SK-N-SH (cell line): ENCODE measurements at regions of chr7 and their contacts with region 1.

Region 1: GRCh38 chr7:28020302-28020940 is 160.2 kb downstream of the JAZF1 start:
- DNase-seq: peak; percentile 84
- H3K4me3 ChIP-seq: no peak overlapping the region; a peak in 1 of 4 replicates
- H3K27ac ChIP-seq: no peak overlapping the region
- H3K4me1 ChIP-seq: peaks cover 7 to 14% of the 10 kb centered on the region in 2 experiments; a peak in 2 of 4 replicates
- H3K27me3 ChIP-seq: no peaks in the 10 kb centered on the region
- CTCF ChIP-seq: peak; percentile 97
- EP300 ChIP-seq: no peak
- RAD21 ChIP-seq: peak; percentile 99

Region 2: DNA sequence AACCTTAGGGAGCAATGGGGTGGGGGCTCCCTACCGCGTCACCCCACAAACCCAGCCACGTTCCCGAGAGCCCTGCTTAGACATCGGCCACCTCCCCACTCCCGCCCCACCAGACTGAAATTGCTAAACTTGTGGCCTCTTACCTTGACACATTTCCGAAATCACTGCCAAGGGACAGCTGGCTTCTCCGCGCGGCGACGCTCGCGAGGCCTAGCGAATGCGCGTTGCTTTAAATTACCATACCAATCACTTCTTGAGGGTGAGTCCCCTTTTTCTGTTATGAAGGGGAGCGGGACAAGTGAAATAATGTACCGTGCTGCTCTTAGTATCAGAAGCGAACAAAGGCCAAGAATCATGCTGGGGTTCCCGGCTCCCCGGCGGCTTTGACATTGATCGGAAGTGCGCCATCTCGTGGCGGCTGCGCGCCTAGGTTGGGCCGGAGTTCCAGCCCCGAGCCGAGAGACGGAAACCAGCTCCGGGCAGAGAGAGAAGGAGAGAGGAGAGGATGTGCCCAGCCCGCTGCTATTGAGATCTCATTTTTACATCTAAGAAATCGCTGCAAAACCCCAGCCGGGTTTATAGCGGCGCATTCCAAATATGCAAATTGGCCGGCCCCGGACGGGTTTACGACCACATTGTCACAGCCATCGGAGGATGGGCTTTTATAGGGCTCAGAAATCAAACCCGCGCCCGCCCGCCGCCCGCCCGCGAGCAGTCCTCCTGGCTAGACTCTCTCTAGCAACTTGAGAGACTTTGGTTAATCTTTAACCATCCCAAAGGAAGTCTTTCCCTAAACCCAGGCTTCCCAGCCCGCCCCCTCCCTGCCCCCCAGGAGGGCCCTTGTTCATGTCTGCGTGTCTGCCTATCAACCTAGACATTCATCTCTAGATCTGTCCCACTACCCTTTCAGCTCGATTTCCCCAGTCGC is 840.7 kb before region 1 on chr7:
- CTCF ChIA-PET with region 1: interaction called, 29 read pairs
- POLR2A ChIA-PET with region 1: no interaction called
- DNase-seq: peak; percentile 93
- H3K4me3 ChIP-seq: peak overlapping the region; percentile 5 to 36; a peak in 2 of 4 replicates
- H3K27ac ChIP-seq: no peak overlapping the region
- H3K4me1 ChIP-seq: peaks cover 4 to 10% of the 10 kb centered on the region in 2 experiments; a peak in 1 of 4 replicates
- H3K27me3 ChIP-seq: peaks cover 97% of the 10 kb centered on the region
- CTCF ChIP-seq: peak; percentile 100
- EP300 ChIP-seq: no peak
- RAD21 ChIP-seq: no peak

Region 3: GRCh38 chr7:27210441-27211083 is 809.9 kb before region 1 on chr7:
- CTCF ChIA-PET with region 1: interaction called, 37 read pairs
- POLR2A ChIA-PET with region 1: no interaction called
- DNase-seq: peak; percentile 85
- H3K4me3 ChIP-seq: peak overlapping the region; percentile 31 to 50
- H3K27ac ChIP-seq: no peak overlapping the region
- H3K4me1 ChIP-seq: peaks cover 0 to 16% of the 10 kb centered on the region in 2 experiments; a peak in 1 of 4 replicates
- H3K27me3 ChIP-seq: peaks cover 97% of the 10 kb centered on the region
- CTCF ChIP-seq: peak; percentile 90
- EP300 ChIP-seq: no peak
- RAD21 ChIP-seq: peak; percentile 72

Region 4: DNA sequence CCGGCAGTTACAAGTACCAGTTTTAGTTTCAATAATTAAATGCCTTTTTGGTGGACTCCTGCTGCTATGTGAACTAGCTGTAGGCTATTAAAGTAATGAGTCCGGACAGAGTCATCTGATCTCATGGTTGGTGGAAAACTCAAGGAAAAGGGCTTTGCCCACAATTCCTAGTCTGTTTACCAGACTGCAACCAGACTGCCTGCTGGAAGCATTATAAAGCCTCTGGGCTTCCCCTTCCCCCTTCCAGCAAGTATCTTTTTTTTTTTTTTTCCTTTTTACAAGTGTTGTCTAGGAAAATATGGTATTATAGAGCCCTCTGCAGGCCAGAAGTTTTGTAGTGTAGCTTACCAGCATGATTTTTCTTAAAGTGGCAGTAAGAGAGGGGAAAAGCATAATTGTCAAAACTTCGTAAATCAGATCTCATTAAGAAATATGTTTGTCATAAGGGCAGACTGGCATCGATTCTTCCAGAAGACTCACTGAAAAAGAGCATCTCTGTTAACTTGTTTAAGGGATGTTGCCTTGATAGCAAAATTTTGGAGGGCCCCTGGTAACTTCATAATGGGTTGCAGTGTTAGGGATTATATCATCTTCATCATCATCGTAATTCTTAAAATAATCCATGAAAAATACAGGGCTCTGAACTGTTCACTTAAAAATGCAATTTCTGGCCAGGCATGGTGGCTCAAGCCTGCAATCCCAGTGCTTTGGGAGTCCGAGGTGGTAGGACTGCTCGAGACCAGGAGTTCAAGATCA is 99.2 kb before region 1 on chr7:
- CTCF ChIA-PET with region 1: interaction called, 43 read pairs
- POLR2A ChIA-PET with region 1: no interaction called
- DNase-seq: peak; percentile 73
- H3K4me3 ChIP-seq: peak overlapping the region in 1 of 2 experiments; percentile 17; a peak in 1 of 4 replicates
- H3K27ac ChIP-seq: peak overlapping the region in 1 of 2 experiments; percentile 43; a peak in 1 of 4 replicates
- H3K4me1 ChIP-seq: peaks cover 0 to 8% of the 10 kb centered on the region in 2 experiments; a peak in 2 of 4 replicates
- H3K27me3 ChIP-seq: no peaks in the 10 kb centered on the region
- CTCF ChIP-seq: peak; percentile 91
- EP300 ChIP-seq: no peak
- RAD21 ChIP-seq: peak; percentile 92

Region 5: DNA sequence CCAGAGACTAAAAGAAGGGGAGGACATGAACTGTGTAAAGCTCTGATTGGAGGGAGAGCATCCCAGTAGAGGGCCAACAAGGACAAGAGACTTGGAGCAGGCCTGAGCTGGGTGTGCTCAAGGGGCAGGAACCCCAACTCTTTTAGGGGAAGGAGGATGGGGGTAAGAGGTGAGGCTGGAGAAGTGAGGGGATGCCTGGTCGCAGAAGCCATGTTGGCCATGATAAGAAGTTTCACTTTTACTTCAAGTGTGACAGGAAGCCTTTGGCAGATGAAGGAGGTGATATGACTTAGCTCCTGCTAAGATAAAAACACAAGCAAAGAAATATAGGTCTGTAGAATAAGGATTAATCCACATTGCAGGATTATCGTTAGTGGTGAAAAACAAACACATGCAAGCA is 48.1 kb before region 1 on chr7:
- CTCF ChIA-PET with region 1: interaction called, 10 read pairs
- POLR2A ChIA-PET with region 1: no interaction called
- DNase-seq: no peak
- H3K4me3 ChIP-seq: no peak overlapping the region
- H3K27ac ChIP-seq: no peak overlapping the region
- H3K4me1 ChIP-seq: no peaks in the 10 kb centered on the region
- H3K27me3 ChIP-seq: no peaks in the 10 kb centered on the region
- CTCF ChIP-seq: no peak
- EP300 ChIP-seq: no peak
- RAD21 ChIP-seq: no peak

Region 6: DNA sequence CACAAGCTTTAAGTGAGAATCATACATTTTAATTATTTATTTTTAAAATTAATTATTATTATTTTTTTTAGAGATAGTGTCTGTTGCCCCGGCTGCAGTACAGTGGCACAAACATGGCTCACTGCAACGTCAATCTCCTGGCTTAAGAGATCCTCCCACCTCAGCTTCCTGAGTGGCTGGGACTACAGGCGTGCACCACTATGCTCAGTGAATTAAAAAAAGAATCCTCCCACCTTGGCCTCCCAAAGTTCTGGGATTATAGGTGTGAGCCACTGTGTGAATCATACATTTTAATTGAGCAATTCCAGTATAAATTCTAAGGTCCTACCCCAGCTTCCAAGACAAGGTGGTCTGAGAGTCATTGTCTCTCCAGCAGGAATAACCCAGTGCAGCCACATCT is 12.2 kb before region 1 on chr7:
- CTCF ChIA-PET with region 1: interaction called, 44 read pairs
- POLR2A ChIA-PET with region 1: no interaction called
- DNase-seq: no peak
- H3K4me3 ChIP-seq: no peak overlapping the region
- H3K27ac ChIP-seq: no peak overlapping the region
- H3K4me1 ChIP-seq: peaks cover 0 to 13% of the 10 kb centered on the region in 2 experiments; a peak in 1 of 4 replicates
- H3K27me3 ChIP-seq: no peaks in the 10 kb centered on the region
- CTCF ChIP-seq: no peak
- EP300 ChIP-seq: no peak
- RAD21 ChIP-seq: no peak

Region 7: GRCh38 chr7:28078036-28078901 is 57.8 kb after region 1 on chr7:
- CTCF ChIA-PET with region 1: interaction called, 10 read pairs
- POLR2A ChIA-PET with region 1: no interaction called
- DNase-seq: peak; percentile 52
- H3K4me3 ChIP-seq: peak overlapping the region in 1 of 2 experiments; percentile 16; a peak in 1 of 4 replicates
- H3K27ac ChIP-seq: peak overlapping the region in 1 of 2 experiments; percentile 96; a peak in 2 of 4 replicates
- H3K4me1 ChIP-seq: peaks cover 13 to 39% of the 10 kb centered on the region in 2 experiments
- H3K27me3 ChIP-seq: no peaks in the 10 kb centered on the region
- CTCF ChIP-seq: peak; percentile 100
- EP300 ChIP-seq: no peak; a peak in 1 of 4 replicates
- RAD21 ChIP-seq: peak; percentile 80